Activated CD8-positive, alpha-beta T cell treated with anti-CD3 and anti-CD28 coated beads, Interleukin-2, amount 10 ng/mL, durations not matched to agents 7 days and 5 days (primary cell): ENCODE measurements at regions of chr1 and their contacts with region 1.

Region 1: DNA sequence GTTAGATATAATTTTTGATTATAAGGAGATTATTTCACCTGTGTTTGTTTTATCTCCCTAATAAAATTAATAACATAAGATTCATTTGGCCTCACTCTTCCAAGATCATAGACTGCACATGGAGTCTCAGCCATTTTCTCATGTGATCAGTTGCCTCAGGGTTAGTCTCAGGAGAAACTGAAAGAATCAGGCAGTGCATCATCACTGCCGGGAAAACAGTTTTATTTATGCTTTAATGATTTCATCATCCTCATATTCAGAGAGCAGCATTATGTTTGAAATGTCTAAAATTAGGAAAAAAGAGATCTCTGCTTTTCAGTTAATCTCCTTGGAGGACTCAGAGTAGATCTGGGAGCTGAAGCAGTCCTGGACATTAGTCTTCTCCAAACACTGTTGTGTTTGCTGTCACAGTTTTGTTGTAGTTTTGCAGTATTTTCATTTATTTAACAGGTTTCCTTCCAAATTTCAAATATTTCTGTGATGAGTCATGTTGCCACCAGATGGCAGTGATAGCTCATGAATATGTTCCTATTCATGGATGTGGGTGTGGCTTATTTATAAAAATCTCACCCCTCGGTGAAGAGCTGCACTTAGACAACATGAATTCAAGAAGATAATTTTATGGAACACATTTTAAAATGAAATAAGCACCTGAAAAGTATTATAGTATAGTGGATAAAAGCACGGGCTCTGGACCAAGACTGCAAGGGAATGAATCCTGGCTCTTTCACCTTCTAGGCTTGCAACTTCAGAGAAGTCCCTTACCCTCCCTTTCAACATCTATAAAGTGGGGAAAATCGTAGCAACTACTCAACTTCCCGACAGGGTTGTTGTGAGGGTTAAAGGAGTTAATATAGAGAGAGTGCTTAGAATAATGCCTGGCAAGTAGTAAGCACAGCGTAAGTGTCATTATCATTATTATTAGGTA is 31.2 kb downstream of the CHD1L start:
- DNase-seq: peak; percentile 46
- ATAC-seq: peak; percentile 58
- H3K4me3 Mint-ChIP-seq: no peak overlapping the region
- H3K27ac Mint-ChIP-seq: no peak overlapping the region
- H3K4me1 Mint-ChIP-seq: no peaks in the 10 kb centered on the region
- H3K27me3 Mint-ChIP-seq: no peaks in the 10 kb centered on the region

Region 2: DNA sequence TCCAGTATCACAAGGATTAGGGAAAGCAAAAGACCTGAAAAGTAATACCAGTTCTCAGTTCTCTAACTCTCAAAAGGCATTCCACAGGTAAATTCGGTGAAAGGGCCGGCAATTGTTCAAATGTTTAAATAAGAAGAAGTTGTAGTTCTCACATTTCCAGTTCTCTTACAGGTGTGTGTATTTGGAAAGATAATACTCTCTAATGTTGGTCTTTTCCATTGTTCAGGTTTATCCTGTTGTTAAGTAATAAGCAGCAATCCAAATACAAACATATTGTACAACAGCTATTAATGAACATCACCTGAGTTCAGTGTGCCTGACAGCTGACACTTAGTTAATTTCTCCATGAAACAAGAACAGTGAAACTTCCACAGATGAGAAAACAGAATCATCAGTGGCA is 88.2 kb before region 1 on chr1:
- CTCF ChIA-PET with region 1: no interaction called
- POLR2A ChIA-PET with region 1: no interaction called
- DNase-seq: no peak
- ATAC-seq: no peak
- H3K4me3 Mint-ChIP-seq: no peak overlapping the region
- H3K27ac Mint-ChIP-seq: no peak overlapping the region
- H3K4me1 Mint-ChIP-seq: no peaks in the 10 kb centered on the region
- H3K27me3 Mint-ChIP-seq: no peaks in the 10 kb centered on the region

Region 3: DNA sequence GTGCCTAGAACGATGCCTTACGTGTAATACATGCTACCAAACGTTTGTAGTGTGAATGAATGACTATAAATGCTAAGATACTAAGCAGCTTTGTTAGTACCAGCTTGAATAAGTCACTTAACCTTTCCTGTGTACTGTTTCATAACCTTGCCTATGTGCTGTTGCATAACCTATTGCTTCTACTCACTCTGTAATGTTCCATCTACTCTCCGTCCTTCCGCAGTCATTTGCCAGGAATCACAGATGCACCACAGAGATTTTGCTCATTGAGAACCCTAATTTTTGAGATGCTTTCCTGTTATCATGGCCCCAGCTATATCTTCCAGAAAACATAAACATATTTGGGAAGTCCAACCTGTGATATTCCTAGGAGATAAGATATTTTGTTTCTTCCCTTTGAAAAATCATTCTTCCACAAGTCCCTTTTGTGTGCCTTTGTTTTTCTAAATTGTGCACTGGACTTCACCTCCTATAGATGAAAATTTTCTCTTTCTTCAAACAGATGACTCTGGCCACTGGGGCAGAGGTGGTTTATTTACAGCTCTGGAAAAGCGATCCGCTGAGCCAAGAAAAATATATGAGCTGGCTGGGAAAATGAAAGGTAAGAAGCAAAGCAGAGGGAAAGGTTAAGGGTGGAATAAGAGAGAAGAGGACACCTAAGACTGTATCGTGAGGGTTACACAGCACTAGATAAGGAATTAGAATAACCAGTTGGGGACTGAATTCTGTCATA is 13.6 kb after region 1 on chr1:
- CTCF ChIA-PET with region 1: interaction called, 17 read pairs
- POLR2A ChIA-PET with region 1: no interaction called
- DNase-seq: no peak
- ATAC-seq: no peak
- H3K4me3 Mint-ChIP-seq: no peak overlapping the region
- H3K27ac Mint-ChIP-seq: no peak overlapping the region
- H3K4me1 Mint-ChIP-seq: peaks cover 3% of the 10 kb centered on the region
- H3K27me3 Mint-ChIP-seq: no peaks in the 10 kb centered on the region

Region 4: GRCh38 chr1:147389532-147390524 is 116.2 kb after region 1 on chr1:
- CTCF ChIA-PET with region 1: interaction called, 60 read pairs
- POLR2A ChIA-PET with region 1: interaction called, 3 read pairs
- DNase-seq: peak; percentile 24
- ATAC-seq: peak; percentile 63
- H3K4me3 Mint-ChIP-seq: no peak overlapping the region
- H3K27ac Mint-ChIP-seq: no peak overlapping the region
- H3K4me1 Mint-ChIP-seq: no peaks in the 10 kb centered on the region
- H3K27me3 Mint-ChIP-seq: peaks cover 14% of the 10 kb centered on the region